PC-3 (cell line): ENCODE measurements at regions of chr3 and their contacts with region 1.

Region 1: DNA sequence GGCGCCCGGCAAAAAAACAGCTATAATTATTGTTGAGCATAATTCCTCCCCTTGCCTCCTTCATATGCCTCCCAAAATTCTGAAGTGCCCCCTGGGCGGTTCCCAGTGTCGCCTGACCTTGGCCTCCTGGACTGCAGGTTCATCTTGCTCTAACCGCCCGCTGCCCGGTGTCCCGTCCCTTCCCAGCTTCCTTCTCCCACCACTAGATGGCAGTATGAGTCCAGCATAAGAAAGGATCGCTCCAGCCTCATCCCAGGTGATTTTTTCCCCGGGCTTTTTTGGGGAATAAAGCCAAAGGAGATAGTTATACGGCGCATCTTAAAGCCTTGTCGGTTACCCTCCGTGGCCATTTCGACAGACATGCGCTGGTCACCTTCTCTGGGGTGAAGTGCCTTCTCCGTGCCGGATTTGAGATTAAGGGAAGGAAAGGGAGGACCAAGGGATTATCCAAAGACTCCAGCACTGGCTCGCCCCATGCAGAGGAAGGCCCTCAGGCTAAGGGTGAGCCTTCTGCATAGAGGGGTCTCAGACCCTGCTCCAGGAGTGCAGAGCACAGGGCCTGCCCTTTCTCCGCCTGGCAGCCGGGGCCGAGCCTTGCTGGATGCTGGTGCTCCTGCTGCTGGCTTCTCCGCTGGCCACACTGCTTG is 45.8 kb upstream of the TRA2B start:
- DNase-seq: peak; percentile 89
- ATAC-seq: peak; percentile 99
- H3K4me3 ChIP-seq: peak overlapping the region; percentile 48
- H3K27ac ChIP-seq: no peak overlapping the region
- H3K4me1 ChIP-seq: peaks cover 14% of the 10 kb centered on the region
- H3K27me3 ChIP-seq: no peaks in the 10 kb centered on the region
- CTCF ChIP-seq: peak; percentile 97

Region 2: GRCh38 chr3:185572183-185572582 is 411.4 kb before region 1 on chr3:
- CTCF ChIA-PET with region 1: interaction called, 11 read pairs
- POLR2A ChIA-PET with region 1: no interaction called
- intact Hi-C with region 1: no loop called
- DNase-seq: no peak
- ATAC-seq: no peak
- H3K4me3 ChIP-seq: no peak overlapping the region
- H3K27ac ChIP-seq: no peak overlapping the region
- H3K4me1 ChIP-seq: no peaks in the 10 kb centered on the region
- H3K27me3 ChIP-seq: no peaks in the 10 kb centered on the region
- CTCF ChIP-seq: no peak

Region 3: DNA sequence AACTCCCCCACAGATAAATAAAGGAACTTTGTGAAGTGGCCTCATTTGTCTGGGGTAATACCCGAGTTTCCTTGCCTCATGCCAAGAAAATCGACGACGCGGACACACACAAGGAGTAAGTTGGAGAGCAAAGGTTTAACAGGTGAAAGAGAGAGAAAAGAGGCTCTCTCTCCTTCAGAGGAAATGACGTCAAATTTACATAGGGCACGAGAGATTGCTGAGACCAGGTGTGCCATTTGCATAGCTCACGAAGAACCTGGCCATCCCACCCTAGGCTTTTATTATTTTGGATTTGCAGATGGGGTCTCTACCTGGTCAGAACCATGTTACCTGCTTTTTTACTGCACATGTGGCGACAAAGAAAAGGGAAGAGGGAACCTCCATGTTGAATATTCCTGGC is 109.5 kb before region 1 on chr3:
- CTCF ChIA-PET with region 1: no interaction called
- POLR2A ChIA-PET with region 1: no interaction called
- intact Hi-C with region 1: no loop called
- DNase-seq: no peak
- ATAC-seq: no peak
- H3K4me3 ChIP-seq: no peak overlapping the region
- H3K27ac ChIP-seq: no peak overlapping the region
- H3K4me1 ChIP-seq: peaks cover 7% of the 10 kb centered on the region; the same call in 1 of the 2 replicates
- H3K27me3 ChIP-seq: no peaks in the 10 kb centered on the region
- CTCF ChIP-seq: no peak

Region 4: DNA sequence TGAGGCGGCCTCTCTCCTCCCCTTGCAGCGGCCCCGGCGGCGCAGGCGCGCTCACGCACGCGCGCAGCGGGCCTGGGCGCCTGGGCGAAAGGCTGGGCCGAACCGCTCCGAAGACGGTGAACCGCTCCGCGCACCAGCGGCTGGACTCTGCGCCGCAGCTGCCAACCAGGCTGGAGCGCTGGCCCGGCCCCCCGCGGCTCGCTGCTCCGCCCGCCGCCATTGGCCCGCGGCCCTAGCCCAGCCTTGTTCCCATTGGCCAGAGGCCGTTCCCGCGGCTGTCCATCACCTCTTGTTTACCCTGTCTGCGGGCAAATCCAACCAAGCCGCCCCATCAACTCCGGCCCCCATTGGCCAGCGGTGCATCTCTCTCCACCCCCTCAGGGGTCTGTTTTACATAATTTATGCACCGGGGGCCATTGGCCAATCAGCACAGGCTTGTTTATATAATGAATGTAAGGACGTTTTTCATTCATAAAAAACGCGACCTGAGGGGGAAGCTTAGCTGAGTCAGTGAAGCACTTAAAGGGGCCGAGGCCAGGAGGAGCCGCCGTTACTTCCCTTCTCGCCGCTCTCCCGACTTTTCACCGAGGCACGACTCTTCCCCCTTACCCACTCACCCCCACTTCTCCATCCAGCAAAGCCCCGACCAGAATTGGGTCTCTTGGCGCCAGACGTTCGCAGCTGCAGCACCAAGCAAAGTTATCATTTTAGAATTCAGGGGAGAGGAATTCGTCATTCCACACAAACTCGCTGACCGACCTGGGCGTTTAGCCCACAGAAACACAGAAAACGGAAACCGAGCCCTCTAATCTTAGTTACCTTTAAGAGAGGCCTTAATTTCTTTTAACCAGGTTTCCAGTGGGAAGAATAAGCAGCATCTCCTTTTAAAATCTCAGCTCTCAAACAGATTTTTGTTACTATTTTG is 125.6 kb after region 1 on chr3 and contains the start of gene ETV5:
- CTCF ChIA-PET with region 1: no interaction called
- POLR2A ChIA-PET with region 1: no interaction called
- intact Hi-C with region 1: loop called (anchors 10 kb)
- DNase-seq: peak; percentile 99
- ATAC-seq: peak; percentile 90
- H3K4me3 ChIP-seq: peak within 1 kb of the TSS; percentile 96
- H3K27ac ChIP-seq: peak within 1 kb of the TSS; percentile 56
- H3K4me1 ChIP-seq: peaks cover 21% of the 10 kb centered on the region
- H3K27me3 ChIP-seq: no peaks in the 10 kb centered on the region
- CTCF ChIP-seq: no peak
- total RNA-seq, gene ETV5: 41.4 and 60.6 TPM in 2 replicates

Region 5: DNA sequence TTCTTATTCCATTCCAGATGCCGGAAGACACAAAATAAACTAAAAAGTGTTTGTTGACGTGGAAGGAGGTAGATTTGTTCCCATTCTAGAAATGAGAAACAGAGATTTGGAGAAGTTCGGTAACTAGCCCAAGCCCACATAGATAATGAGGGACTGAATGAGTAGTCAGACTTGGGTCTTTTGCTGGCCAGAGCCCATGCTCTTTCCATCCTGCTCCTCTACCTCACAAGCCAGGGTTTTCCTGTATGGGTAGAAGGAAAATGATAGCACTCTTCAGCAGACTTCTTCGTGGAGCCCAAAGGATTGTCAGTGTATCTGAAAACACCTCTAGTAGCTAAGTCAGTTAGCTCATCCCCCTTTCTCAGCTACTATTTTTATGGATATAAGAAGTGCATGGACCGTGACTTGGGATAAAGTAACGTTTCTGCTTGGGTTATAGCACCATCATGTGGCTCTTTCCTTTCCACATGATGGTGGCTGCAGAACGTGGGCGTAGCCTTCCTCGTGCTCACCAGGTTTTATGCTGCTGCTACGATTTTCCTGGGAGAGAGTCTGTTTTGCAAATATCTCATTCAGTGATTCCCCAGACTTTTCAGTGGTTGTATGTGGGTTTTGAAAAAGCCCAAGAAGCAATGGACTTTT is 293.8 kb after region 1 on chr3:
- CTCF ChIA-PET with region 1: no interaction called
- POLR2A ChIA-PET with region 1: no interaction called
- intact Hi-C with region 1: loop called (anchors 1 kb)
- DNase-seq: peak; percentile 56
- ATAC-seq: peak; percentile 66
- H3K4me3 ChIP-seq: no peak overlapping the region
- H3K27ac ChIP-seq: no peak overlapping the region
- H3K4me1 ChIP-seq: peaks cover 17% of the 10 kb centered on the region
- H3K27me3 ChIP-seq: no peaks in the 10 kb centered on the region
- CTCF ChIP-seq: peak; percentile 57

Region 6: GRCh38 chr3:186617038-186617946 is 633.7 kb after region 1 on chr3:
- CTCF ChIA-PET with region 1: no interaction called
- POLR2A ChIA-PET with region 1: no interaction called
- intact Hi-C with region 1: loop called (anchors 2 kb)
- DNase-seq: peak; percentile 99
- ATAC-seq: peak; percentile 98
- H3K4me3 ChIP-seq: peak overlapping the region; percentile 54
- H3K27ac ChIP-seq: 0 out of 2 replicates have a peak overlapping the region, but pooled peaks have one; percentile 35
- H3K4me1 ChIP-seq: peaks cover 16% of the 10 kb centered on the region
- H3K27me3 ChIP-seq: no peaks in the 10 kb centered on the region
- CTCF ChIP-seq: peak; percentile 96

Region 7: GRCh38 chr3:187164885-187165543 is 1181.4 kb after region 1 on chr3:
- CTCF ChIA-PET with region 1: interaction called, 18 read pairs
- POLR2A ChIA-PET with region 1: no interaction called
- intact Hi-C with region 1: loop called (anchors 10 kb)
- DNase-seq: peak; percentile 82
- ATAC-seq: peak; percentile 81
- H3K4me3 ChIP-seq: no peak overlapping the region
- H3K27ac ChIP-seq: no peak overlapping the region
- H3K4me1 ChIP-seq: peaks cover 5% of the 10 kb centered on the region; the same call in 1 of the 2 replicates
- H3K27me3 ChIP-seq: 0 out of 2 replicates have a peak, but pooled peaks cover 3% of the 10 kb centered on the region
- CTCF ChIP-seq: peak; percentile 80